Ovary (tissue), 10 donors: ENCODE measurements at regions of chr13 and their contacts with region 1.

Region 1: DNA sequence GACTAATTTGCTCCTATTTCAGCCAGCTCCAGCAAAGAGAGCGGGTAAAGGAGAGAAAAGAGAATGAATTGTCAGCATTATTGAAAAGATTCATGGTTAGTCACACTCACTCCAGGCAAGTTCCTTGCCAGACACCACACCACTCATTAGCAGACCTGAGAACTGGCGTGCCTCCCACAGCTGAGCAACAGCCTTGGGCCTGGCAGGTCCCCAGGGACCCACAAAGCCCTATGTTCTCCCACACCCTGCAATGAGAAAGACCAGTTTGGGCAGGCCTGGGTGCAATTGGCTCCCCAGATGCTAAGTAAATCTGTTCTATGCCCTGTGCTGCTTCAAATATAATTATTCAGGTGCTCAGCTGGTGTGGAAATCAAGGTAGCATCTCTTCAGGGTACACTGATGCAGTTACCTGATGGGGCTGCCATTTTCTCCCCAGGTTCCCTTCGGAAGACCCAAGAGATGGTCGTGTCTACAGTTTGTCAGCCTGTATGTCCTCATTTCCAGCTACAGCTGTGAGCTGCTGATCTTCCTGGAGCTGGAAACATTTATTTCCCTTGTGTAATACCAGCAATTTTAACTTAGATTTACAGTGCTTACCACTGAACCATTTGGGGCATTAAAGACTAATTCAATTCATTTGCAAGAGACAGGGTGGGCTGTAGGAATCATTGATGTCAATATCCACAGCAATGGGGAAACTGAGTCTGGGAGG is 405.0 kb downstream of the COG6 start:
- DNase-seq: peak; percentile 78 to 88 (median 83)
- H3K4me3 ChIP-seq: no peak overlapping the region
- H3K27ac ChIP-seq: peak overlapping the region in 1 of 2 donors; percentile 11
- H3K4me1 ChIP-seq: peaks cover 10% of the 10 kb centered on the region
- H3K27me3 ChIP-seq: no peaks in the 10 kb centered on the region
- CTCF ChIP-seq: no peak
- EP300 ChIP-seq: no peak
- POLR2A ChIP-seq: no peak

Region 2: DNA sequence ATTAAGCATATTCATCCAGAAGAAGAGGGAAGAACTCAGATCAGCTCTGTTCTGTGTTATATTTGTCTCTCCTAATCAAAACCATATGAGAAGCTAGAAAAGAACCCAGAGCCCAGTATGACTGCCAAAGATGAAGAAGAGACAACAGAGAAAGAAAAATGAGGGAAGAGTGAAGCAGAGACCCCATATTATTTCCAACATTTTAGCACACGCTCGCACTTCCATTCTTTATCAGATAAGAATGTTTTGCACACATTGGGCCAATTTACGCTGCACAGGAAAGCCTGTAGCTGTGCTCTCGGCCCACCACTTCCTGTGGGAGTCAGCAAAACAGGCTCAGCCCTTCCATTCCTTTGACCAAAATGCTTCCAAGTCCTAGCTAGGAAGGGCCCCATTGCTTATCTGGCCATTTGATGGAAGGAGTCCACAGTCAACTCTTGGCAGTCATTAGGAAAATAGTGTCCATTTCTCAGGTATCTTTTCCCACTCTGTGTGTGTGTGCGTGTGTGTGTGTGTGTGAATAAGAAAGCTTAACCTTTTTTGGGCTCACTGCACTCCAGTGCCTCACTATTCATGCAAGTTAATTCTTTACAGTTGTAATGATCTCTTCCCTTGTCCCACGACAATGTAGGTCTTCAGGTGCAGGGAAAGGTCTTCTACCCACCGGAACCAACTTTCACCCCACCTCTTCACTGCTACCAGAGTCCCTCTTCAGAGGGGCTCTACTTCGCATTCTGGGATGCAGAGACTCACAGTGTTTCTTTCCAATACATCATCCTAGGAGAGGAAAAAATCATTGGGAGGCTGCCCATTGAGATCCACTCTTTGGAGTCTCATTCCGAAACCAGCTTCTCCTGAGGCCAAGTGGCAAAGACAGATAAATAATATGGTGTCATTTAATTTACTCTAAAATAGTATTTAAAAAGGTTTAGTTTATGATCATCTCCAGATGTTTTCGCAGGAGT is 167.4 kb before region 1 on chr13:
- intact Hi-C with region 1: loop called in 1 of 4 experiments (anchors 5 kb)
- DNase-seq: no peak
- H3K4me3 ChIP-seq: no peak overlapping the region
- H3K27ac ChIP-seq: peak overlapping the region in 1 of 2 donors; percentile 3
- H3K4me1 ChIP-seq: peaks cover 16% of the 10 kb centered on the region
- H3K27me3 ChIP-seq: no peaks in the 10 kb centered on the region
- CTCF ChIP-seq: no peak
- EP300 ChIP-seq: no peak
- POLR2A ChIP-seq: no peak